Psoas muscle (tissue), 8 donors: ENCODE measurements at regions of chr9 and their contacts with region 1.

Region 1: DNA sequence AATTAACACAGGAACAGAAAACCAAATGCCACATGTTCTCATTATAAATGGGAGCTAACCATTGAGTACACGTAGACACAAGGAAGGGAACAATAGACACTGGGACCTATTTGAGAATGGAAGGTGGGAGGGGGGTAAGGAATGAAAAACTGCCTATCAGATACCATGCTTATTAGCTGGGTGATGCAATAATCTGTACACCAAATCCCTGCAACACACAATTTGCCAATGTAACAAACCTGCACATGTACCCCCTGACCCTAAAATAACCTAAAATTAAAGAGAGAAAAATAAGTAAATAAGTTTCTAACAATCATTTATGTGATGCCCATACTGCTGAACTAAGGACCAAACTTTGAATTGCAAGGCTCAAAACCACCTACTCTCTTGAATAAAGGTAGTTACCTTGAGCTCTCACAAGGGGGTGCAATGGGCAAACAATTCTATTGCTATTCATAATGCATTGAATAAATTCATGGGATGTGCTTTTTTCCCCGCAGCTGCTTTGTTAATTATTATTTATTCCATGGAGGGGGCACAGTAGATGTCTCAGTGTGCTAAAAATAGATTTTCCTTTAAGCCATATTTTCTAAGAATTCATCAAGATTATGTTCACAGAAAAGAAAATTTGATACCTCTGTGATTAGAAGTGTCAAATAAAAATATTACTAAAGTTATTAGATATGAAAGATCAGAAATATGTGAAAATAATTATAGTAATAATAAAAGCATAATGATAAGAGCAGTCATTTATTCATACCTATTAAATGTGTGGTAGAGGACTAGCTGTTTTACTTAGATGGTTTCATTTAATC is 76.2 kb upstream of the PTPN3 start:
- DNase-seq: no peak
- ATAC-seq: peak; percentile 58 to 84 (median 76)
- H3K4me3 ChIP-seq: no peak overlapping the region
- H3K27ac ChIP-seq: no peak overlapping the region
- H3K4me1 ChIP-seq: no peaks in the 10 kb centered on the region
- H3K27me3 ChIP-seq: no peaks in the 10 kb centered on the region
- CTCF ChIP-seq: peak; percentile 74

Region 2: DNA sequence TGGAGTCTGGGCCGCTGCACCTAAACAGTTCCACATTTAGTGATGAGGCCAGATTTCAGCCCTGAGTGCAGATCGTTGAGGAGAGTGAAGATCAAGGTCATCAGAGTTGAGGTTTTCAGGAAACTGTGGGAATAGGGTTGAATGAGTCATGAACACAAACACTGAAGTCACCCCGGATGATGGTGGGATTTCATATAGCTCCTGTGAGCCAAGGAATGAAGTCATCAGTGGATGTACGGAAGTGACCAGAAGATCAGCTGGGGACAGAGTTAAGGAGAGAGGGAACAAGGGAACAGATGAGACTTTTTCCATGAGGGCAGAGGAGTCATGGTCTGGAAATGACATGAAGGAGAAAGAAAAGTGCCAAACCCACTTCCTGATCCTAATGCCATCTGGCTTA is 242.2 kb after region 1 on chr9:
- intact Hi-C with region 1: loop called (anchors 1 to 5 kb)
- DNase-seq: no peak
- ATAC-seq: peak; percentile 60 to 84 (median 75)
- H3K4me3 ChIP-seq: no peak overlapping the region
- H3K27ac ChIP-seq: no peak overlapping the region
- H3K4me1 ChIP-seq: peaks cover 3% of the 10 kb centered on the region
- H3K27me3 ChIP-seq: peaks cover 0 to 3% (median 1%) of the 10 kb centered on the region in 3 donors
- CTCF ChIP-seq: no peak

Region 3: GRCh38 chr9:109889456-109889855 is 315.2 kb after region 1 on chr9:
- intact Hi-C with region 1: loop called (anchors 2 kb)
- DNase-seq: no peak
- ATAC-seq: no peak
- H3K4me3 ChIP-seq: no peak overlapping the region
- H3K27ac ChIP-seq: no peak overlapping the region
- H3K4me1 ChIP-seq: peaks cover 19% of the 10 kb centered on the region
- H3K27me3 ChIP-seq: no peaks in the 10 kb centered on the region
- CTCF ChIP-seq: no peak

Region 4: DNA sequence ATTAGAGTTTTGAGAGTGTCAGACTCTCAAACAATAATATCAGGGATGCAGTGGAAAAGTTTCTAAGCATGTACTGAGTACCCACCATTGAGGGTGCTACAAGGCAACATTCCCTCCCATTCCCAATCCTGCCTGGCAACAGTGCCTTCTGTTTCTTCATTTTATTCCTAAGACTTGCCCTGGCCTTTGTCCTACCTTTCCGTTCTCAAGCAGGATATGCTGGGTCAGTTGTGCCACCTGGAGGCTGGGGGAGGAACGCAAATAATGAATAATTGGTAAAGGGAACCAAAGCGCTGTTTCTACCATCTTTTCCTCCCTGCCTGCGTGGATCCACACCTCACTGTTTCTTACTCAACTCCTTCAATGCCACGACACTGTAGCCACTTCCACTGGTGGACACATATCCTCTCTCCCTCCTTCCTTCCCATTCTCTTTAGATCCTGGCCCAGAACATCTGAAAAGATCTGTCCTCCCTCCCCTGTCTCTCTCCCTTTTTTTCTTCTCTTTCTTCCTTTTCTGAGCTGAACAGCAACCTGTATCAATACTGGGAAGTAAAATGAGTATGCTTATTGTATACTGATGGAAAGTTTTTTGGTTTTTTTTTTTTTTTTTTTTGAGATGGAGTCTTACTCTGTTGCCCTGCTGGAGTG is 484.2 kb after region 1 on chr9:
- intact Hi-C with region 1: loop called (anchors 5 kb)
- DNase-seq: peak in 1 of 2 donors; percentile 29
- ATAC-seq: peak; percentile 66 to 85 (median 79)
- H3K4me3 ChIP-seq: no peak overlapping the region
- H3K27ac ChIP-seq: no peak overlapping the region
- H3K4me1 ChIP-seq: no peaks in the 10 kb centered on the region
- H3K27me3 ChIP-seq: peaks cover 0 to 4% (median 0%) of the 10 kb centered on the region in 3 donors
- CTCF ChIP-seq: peak; percentile 69

Region 5: DNA sequence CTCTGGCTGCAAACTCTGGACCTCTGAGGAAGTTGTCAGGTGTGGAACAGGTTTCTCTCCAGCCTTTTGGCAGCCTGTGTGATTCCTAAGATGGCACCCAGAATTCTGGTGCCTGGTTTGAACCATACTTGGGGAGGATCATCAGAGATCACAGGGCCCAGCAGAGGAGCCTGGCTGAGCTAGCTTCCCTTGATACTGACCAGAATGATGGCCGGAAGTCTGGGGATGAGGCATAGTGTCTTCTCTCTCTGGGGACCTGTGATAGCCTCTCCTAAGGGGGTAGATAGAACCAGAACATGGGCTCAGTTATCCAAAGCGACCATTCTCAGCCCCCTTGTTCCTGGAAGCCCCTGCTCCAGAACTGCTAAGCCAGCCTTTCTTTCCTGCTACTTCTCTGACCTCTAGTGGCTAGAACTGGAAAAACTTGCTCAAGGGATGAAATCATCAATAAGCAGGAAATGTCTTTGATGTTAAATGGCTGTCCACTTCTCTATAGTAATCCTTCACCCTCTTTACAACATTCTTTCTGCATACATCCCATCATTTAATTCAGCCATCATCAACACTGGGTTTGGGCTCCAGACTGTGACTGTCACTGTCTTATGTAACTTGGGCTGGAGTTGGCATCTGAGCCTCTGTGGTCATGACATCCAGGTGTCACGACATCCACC is 578.6 kb after region 1 on chr9:
- intact Hi-C with region 1: loop called (anchors 5 to 10 kb)
- DNase-seq: no peak
- ATAC-seq: peak; percentile 36 to 68 (median 42)
- H3K4me3 ChIP-seq: no peak overlapping the region
- H3K27ac ChIP-seq: no peak overlapping the region
- H3K4me1 ChIP-seq: peaks cover 21% of the 10 kb centered on the region
- H3K27me3 ChIP-seq: no peaks in the 10 kb centered on the region
- CTCF ChIP-seq: peak; percentile 67

Region 6: DNA sequence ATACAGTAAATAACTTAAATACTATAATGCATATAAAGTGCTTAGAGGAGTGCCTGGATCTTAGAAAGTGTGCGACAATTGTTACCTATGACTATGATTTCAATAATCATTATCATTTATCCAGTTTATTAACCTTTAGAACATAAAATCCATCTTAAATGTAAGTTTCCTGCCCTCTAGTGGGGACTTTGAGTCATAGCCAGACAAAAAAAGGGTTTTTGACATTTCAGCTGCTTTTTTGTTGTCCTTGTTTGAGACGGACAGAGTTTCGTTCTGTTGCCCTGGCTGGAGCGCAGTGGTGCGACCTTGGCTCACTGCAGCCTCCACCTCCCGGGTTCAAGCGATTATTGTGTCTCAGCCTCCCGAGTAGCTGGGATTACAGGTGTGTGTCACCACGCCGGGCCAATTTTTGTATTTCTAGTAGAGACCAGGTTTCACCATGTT is 643.4 kb after region 1 on chr9:
- intact Hi-C with region 1: loop called in 1 of 2 experiments (anchors 10 kb)
- DNase-seq: no peak
- ATAC-seq: no peak
- H3K4me3 ChIP-seq: no peak overlapping the region
- H3K27ac ChIP-seq: no peak overlapping the region
- H3K4me1 ChIP-seq: no peaks in the 10 kb centered on the region
- H3K27me3 ChIP-seq: no peaks in the 10 kb centered on the region
- CTCF ChIP-seq: peak; percentile 74